Gastrocnemius medialis (tissue), 4 donors: ENCODE measurements at regions of chr2 and their contacts with region 1.

Region 1: DNA sequence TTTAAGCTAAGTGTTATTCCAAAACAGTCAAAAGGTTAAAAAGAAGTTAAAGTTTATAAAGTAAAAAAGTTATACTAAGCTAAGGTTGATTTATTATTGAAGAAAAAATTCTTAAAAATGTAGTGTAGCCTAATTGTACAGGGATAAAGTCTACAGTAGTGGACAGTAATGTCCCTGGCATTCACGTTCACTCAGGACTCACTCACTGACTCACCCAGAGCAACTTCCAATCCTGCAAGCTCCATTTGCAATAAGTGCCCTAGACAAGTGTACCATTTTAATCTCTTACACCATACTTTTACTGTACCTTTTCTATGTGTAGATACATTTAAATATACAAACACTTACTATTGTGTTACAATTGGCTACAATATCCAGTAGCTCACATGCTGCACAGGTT is 86.1 kb downstream of the CACNB4 start:
- DNase-seq: no peak
- ATAC-seq: no peak
- H3K4me3 ChIP-seq: no peak overlapping the region
- H3K27ac ChIP-seq: no peak overlapping the region
- H3K4me1 ChIP-seq: no peaks in the 10 kb centered on the region
- H3K27me3 ChIP-seq: no peaks in the 10 kb centered on the region
- CTCF ChIP-seq: no peak
- POLR2A ChIP-seq: no peak

Region 2: DNA sequence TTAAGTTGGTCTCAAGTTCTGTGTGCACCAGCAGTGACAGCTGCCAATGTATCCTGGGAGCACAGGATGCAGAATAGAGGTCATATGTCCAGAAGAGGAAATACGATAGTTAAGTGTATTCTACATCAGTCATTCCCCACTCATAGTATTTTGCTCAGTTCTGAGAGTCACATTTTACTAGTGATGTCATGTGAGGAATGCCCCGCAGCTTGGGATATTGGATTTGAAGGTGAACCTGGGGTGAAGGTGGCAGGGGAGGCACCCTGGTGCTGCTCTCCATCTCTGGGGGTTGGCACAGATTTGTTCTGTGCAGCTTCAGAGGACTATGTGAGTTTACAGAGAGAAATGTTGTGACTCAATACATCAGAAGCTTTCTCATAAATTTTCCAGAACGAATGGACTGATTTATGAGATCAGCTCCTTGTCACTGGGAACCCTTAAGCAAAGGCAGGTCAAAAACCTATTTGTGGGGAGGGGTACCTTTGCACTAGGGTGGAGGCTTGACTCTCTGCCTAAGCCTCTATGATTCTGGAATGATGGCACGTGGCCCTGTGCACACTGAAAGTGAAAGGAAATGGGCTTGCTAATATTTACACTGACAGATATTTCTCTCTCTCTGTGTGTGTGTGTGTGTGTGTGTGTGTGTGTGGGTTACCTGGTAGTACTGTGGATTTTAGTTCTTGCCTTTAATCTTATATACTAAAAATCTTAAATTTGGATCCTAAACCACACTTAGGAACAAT is 374.3 kb before region 1 on chr2:
- in situ Hi-C with region 1: loop called in 1 of 4 experiments (anchors 25 kb)
- intact Hi-C with region 1: no loop called
- DNase-seq: peak in 1 of 2 donors; percentile 48
- ATAC-seq: peak; percentile 70 to 86
- H3K4me3 ChIP-seq: no peak overlapping the region
- H3K27ac ChIP-seq: peak overlapping the region in 3 of 4 donors; percentile 39 to 72 (median 65)
- H3K4me1 ChIP-seq: peaks cover 6 to 7% of the 10 kb centered on the region in 2 donors
- H3K27me3 ChIP-seq: no peaks in the 10 kb centered on the region
- CTCF ChIP-seq: no peak
- POLR2A ChIP-seq: no peak

Region 3: DNA sequence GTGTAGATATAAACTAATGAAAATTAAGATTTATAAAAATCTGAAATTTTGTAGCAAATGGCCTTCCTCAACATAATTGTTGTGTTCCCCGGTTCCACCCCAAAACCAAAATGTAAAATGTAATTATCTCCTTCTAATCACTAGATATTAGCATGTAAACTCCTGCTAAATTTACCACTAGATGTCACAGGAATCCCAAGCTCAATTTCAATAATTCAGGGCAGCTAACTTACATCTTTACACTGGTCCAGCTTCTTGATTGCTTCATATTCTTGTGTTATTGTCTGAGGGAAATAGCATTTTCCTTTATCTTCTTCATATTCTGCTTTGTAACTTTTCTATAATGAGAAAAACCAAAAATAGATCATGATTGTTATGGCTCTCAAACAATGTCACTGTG is 321.1 kb before region 1 on chr2:
- in situ Hi-C with region 1: loop called in 1 of 4 experiments (anchors 25 kb)
- intact Hi-C with region 1: no loop called
- DNase-seq: no peak
- ATAC-seq: no peak
- H3K4me3 ChIP-seq: no peak overlapping the region
- H3K27ac ChIP-seq: peak overlapping the region; percentile 14 to 48 (median 42)
- H3K4me1 ChIP-seq: no peaks in the 10 kb centered on the region
- H3K27me3 ChIP-seq: no peaks in the 10 kb centered on the region
- CTCF ChIP-seq: no peak
- POLR2A ChIP-seq: no peak

Region 4: DNA sequence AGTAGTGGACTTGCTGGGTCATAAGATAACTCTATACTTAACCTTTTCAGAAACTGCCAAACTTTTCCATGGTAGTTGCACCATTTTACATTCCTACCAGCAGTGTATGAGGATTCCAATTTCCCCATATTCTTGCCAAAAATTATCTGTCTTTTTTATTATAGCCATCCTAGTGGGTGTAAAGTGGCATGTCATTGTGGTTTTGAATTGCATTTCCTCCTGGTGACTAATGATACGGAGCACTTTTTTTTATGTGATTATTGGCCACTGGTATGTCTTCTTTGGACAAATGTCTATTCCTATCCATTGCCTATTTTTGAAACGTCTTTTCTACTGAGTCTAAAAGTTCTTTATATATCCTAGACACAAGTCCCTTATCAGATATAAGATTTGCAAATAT is 41.9 kb after region 1 on chr2:
- in situ Hi-C with region 1: no loop called
- intact Hi-C with region 1: no loop called
- DNase-seq: no peak
- ATAC-seq: no peak
- H3K4me3 ChIP-seq: no peak overlapping the region
- H3K27ac ChIP-seq: no peak overlapping the region
- H3K4me1 ChIP-seq: no peaks in the 10 kb centered on the region
- H3K27me3 ChIP-seq: no peaks in the 10 kb centered on the region
- CTCF ChIP-seq: no peak
- POLR2A ChIP-seq: no peak

Region 5: DNA sequence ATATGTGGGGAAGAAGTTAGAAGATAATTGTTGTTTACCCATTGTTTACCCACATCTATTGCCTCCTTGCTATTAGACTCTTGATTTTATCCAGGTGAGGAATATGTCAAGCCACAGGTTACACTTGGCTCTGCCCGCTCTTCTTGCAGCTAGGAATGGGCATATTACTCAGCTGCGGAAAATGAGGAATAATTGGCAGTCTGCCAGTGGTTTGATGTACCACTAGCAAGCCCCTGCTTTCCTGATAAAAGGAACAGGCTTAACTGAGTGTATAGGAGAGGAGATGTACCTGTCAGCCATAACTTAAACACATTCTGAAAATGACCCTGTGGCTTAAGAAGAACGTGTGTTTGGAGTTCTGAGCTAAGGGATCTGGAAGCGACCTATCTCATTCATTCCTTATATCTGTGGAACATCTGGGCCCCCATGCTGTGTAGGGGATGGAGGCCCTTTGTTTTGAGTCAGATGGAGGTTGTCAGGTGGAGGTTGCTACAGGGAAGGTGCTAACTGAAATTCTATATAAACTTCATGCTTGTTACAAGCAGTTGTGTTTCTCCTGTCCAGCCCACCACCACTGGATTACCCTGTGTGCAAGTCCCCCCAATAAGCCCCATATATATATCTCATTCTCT is 317.7 kb after region 1 on chr2:
- in situ Hi-C with region 1: no loop called
- intact Hi-C with region 1: no loop called
- DNase-seq: no peak
- ATAC-seq: no peak
- H3K4me3 ChIP-seq: no peak overlapping the region
- H3K27ac ChIP-seq: no peak overlapping the region
- H3K4me1 ChIP-seq: peaks cover 6 to 11% of the 10 kb centered on the region in 2 donors
- H3K27me3 ChIP-seq: no peaks in the 10 kb centered on the region
- CTCF ChIP-seq: no peak
- POLR2A ChIP-seq: no peak